ENCODE measurements at regions of chr9 and their contacts with region 1.

Region 1: GRCh38 chr9:20622330-20623020 is at the start of gene MLLT3:
- DNase-seq: peak; percentile 97
- H3K4me3 Mint-ChIP-seq: peak within 1 kb of the TSS; percentile 91
- H3K27ac Mint-ChIP-seq: peak within 1 kb of the TSS; percentile 92
- H3K4me1 Mint-ChIP-seq: peaks cover 37% of the 10 kb centered on the region
- H3K27me3 Mint-ChIP-seq: no peaks in the 10 kb centered on the region
- total RNA-seq, gene MLLT3: 53.4 to 57.5 TPM

Region 2: GRCh38 chr9:20319641-20320337 is 302.7 kb before region 1 on chr9:
- CTCF ChIA-PET with region 1: interaction called, 7 read pairs
- POLR2A ChIA-PET with region 1: interaction called, 28 read pairs
- DNase-seq: peak; percentile 30
- H3K4me3 Mint-ChIP-seq: no peak overlapping the region
- H3K27ac Mint-ChIP-seq: peak overlapping the region; percentile 81
- H3K4me1 Mint-ChIP-seq: peaks cover 78% of the 10 kb centered on the region
- H3K27me3 Mint-ChIP-seq: no peaks in the 10 kb centered on the region

Region 3: GRCh38 chr9:20512106-20512505 is 110.4 kb before region 1 on chr9:
- CTCF ChIA-PET with region 1: interaction called, 3 read pairs
- POLR2A ChIA-PET with region 1: interaction called, 21 read pairs
- DNase-seq: no peak
- H3K4me3 Mint-ChIP-seq: no peak overlapping the region
- H3K27ac Mint-ChIP-seq: peak overlapping the region; percentile 4
- H3K4me1 Mint-ChIP-seq: peaks cover 77% of the 10 kb centered on the region
- H3K27me3 Mint-ChIP-seq: no peaks in the 10 kb centered on the region

Region 4: DNA sequence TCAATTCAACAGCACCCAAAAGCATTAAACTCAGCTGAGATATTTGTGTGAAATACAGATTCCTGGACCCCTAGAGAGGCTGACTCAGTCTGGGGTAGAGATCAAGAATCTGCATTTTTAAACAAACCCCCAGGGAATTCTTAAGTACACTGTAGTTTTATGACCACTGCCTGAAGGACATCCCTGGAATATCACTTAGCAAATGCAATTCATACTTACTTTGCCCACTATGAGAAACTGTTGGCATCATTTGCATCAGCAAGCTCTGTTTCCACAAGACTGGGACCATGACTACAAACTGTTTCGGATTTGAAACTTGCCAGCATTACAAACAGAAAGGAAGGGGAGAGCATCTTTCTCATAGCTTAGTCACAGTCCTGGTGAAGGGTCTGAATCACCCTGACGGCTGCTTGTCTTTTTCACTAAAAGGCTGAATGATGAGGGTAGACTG is 63.9 kb before region 1 on chr9:
- CTCF ChIA-PET with region 1: interaction called, 16 read pairs
- POLR2A ChIA-PET with region 1: interaction called, 39 read pairs
- DNase-seq: peak; percentile 38
- H3K4me3 Mint-ChIP-seq: no peak overlapping the region
- H3K27ac Mint-ChIP-seq: peak overlapping the region; percentile 34
- H3K4me1 Mint-ChIP-seq: peaks cover 78% of the 10 kb centered on the region
- H3K27me3 Mint-ChIP-seq: no peaks in the 10 kb centered on the region

Region 5: GRCh38 chr9:20611751-20612287 is 10.7 kb before region 1 on chr9:
- CTCF ChIA-PET with region 1: interaction called, 13 read pairs
- POLR2A ChIA-PET with region 1: interaction called, 23 read pairs
- DNase-seq: no peak
- H3K4me3 Mint-ChIP-seq: no peak overlapping the region
- H3K27ac Mint-ChIP-seq: no peak overlapping the region
- H3K4me1 Mint-ChIP-seq: peaks cover 50% of the 10 kb centered on the region
- H3K27me3 Mint-ChIP-seq: no peaks in the 10 kb centered on the region

Region 6: DNA sequence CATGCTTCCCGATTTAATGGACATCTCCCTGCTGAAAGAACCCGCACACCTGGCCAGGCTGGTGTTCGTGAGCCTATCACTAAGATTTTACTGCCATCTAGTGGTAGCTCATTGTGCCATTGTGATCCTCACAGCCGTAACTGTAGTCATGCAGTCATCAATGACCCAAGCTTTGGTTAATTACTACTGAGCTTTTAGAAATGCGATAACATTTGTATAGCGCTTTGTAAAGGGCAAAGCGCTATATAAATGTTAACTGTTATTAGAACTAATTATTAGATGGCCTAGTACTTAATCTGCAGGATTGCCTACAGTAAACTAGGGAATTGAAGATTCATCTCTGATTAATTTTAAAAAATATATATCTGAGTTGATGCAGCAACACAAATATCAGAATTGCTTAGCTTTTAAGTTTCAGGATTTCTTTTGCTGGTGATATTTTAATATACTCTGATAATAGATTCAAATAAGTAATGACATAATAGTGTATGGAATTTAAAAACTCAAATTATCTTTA is 318.8 kb after region 1 on chr9:
- CTCF ChIA-PET with region 1: interaction called, 44 read pairs
- POLR2A ChIA-PET with region 1: interaction called, 4 read pairs
- DNase-seq: peak; percentile 51
- H3K4me3 Mint-ChIP-seq: no peak overlapping the region
- H3K27ac Mint-ChIP-seq: no peak overlapping the region
- H3K4me1 Mint-ChIP-seq: peaks cover 3% of the 10 kb centered on the region
- H3K27me3 Mint-ChIP-seq: no peaks in the 10 kb centered on the region

Region 7: DNA sequence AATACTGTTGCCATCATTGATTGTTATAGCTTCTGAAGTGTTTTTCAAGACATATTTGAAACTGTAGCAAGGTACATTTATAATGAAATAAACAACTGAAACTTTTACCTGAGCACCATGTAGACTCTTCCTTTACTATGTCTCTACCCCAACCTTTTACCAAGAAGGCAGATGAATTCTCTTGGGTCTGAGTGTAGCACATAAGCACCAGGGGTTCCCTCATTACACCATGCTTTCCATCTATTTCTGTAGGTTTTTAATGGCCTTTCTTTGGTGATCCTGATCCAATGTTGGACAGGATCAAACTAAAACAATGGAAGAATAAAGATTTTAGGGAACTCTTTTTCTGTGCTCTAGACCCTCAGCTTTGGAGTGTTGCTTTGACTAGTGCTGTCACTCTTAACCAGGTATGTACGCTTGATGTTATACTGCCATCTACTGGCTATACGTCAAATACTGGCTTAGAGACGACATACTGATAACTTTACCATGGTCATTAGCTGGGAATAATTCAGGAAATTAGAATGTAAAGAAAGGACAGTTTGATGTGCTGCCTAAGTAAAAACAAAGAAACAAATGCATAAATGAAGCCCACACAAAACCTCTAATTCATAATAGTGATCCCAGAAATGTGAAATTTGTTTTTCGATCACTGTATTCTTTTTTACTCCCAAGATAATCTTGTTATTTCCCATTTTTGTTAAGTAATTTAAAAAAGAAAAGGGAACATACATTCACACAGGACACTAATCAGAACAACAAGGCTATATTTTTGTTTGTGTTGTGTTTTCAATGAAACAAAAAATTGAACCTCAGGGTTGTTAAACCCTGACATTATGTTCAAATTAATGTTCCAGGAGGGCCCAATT is 488.5 kb after region 1 on chr9:
- CTCF ChIA-PET with region 1: interaction called, 14 read pairs
- POLR2A ChIA-PET with region 1: interaction called, 5 read pairs
- DNase-seq: no peak
- H3K4me3 Mint-ChIP-seq: no peak overlapping the region
- H3K27ac Mint-ChIP-seq: no peak overlapping the region
- H3K4me1 Mint-ChIP-seq: no peaks in the 10 kb centered on the region
- H3K27me3 Mint-ChIP-seq: peaks cover 12% of the 10 kb centered on the region